MCF 10A (cell line): ENCODE measurements at regions of chr3 and their contacts with region 1.

Region 1: GRCh38 chr3:189841473-189842210 is 210.5 kb downstream of the TP63 start:
- DNase-seq: peak; percentile 94
- H3K4me3 Mint-ChIP-seq: peak overlapping the region; percentile 57
- H3K27ac Mint-ChIP-seq: peak overlapping the region; percentile 99
- H3K4me1 Mint-ChIP-seq: peaks cover 58% of the 10 kb centered on the region
- H3K27me3 Mint-ChIP-seq: no peaks in the 10 kb centered on the region
- CTCF ChIP-seq: no peak

Region 2: DNA sequence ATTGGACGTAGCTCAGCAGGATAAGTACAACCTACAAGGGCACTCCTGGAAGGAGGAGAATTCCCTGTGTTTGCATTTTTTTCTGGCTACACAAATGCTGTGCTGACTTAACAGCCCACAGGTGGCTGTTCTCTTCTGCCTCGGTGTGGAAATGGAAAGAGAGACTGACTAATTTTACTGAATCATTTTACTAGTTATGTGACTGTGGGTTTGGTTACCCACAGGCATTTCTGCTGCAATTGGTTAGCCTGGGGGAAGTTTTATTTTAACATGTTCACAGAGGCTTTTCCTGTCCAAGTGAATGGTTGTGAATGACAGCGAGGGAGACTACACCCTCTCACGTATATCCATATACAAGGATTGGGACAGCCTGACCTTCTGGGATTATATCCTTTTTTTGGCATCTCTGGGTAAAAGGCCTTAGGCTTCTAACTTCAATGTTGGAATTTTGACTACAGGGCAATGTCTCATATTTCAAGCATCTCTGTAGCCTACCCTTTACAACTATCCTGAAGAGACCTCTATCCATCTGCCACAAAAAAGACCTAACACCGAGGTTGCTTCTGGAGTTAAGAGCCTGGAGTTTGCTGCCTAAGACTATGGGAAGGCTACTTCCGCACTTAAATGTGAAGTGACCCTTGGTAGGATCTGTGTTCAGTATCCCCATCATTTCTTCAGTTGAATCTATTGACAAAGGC is 277.6 kb before region 1 on chr3:
- CTCF ChIA-PET with region 1: no interaction called
- POLR2A ChIA-PET with region 1: interaction called, 10 read pairs
- intact Hi-C with region 1: loop called (anchors 2 kb)
- DNase-seq: peak; percentile 92
- H3K4me3 Mint-ChIP-seq: no peak overlapping the region
- H3K27ac Mint-ChIP-seq: peak overlapping the region; percentile 69
- H3K4me1 Mint-ChIP-seq: peaks cover 26% of the 10 kb centered on the region
- H3K27me3 Mint-ChIP-seq: no peaks in the 10 kb centered on the region
- CTCF ChIP-seq: no peak

Region 3: GRCh38 chr3:189685854-189686253 is 155.8 kb before region 1 on chr3:
- CTCF ChIA-PET with region 1: no interaction called
- POLR2A ChIA-PET with region 1: no interaction called
- intact Hi-C with region 1: no loop called
- DNase-seq: peak; percentile 34
- H3K4me3 Mint-ChIP-seq: no peak overlapping the region
- H3K27ac Mint-ChIP-seq: peak overlapping the region; percentile 47
- H3K4me1 Mint-ChIP-seq: peaks cover 10% of the 10 kb centered on the region
- H3K27me3 Mint-ChIP-seq: no peaks in the 10 kb centered on the region
- CTCF ChIP-seq: no peak

Region 4: DNA sequence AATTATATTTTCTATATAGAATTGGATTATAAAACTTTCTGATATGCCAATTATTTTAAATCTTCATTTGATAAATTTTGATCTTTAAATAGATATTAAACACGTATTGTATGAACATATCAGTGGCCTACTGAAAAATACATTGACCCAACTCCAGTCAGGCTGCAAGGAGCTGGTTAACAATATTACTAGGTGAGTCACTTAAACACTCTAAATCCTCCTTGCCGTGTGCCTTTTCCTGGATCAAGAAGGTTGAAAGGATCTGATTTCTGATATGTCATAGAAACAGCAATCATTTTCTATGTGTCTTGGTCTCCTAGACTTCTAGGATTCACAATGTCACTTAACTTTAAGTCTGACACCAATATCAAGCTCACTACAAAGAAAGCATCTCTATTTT is 87.3 kb before region 1 on chr3:
- CTCF ChIA-PET with region 1: no interaction called
- POLR2A ChIA-PET with region 1: no interaction called
- intact Hi-C with region 1: no loop called
- DNase-seq: no peak
- H3K4me3 Mint-ChIP-seq: no peak overlapping the region
- H3K27ac Mint-ChIP-seq: no peak overlapping the region
- H3K4me1 Mint-ChIP-seq: peaks cover 10% of the 10 kb centered on the region
- H3K27me3 Mint-ChIP-seq: no peaks in the 10 kb centered on the region
- CTCF ChIP-seq: no peak

Region 5: DNA sequence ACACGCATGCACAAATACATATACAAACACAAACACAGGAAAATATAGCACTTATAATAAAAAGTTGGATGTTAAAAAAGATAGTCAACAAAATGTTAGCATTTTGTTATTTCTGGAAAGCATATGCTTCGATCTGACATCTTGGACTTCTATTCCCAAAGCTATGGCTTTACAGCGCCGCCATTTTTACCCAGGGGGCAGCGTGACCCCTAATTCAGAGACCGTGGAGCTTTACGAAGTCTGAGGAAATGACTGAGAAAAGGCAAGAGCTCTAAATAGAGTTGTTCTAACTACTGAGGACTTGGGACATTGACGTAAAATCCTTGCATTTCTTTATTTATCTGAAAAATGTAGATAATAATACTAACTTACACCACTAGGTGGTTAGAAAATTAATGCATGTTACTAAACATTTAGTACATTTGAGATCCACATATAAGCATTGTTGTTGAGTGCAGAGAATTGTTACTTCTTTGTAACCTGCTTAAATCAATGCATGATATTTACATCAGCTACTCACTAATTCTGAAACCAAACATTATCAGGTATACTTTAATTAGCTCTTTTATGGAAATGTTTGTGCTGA is 55.1 kb before region 1 on chr3:
- CTCF ChIA-PET with region 1: no interaction called
- POLR2A ChIA-PET with region 1: interaction called, 86 read pairs
- intact Hi-C with region 1: no loop called
- DNase-seq: no peak
- H3K4me3 Mint-ChIP-seq: no peak overlapping the region
- H3K27ac Mint-ChIP-seq: no peak overlapping the region
- H3K4me1 Mint-ChIP-seq: peaks cover 5% of the 10 kb centered on the region
- H3K27me3 Mint-ChIP-seq: no peaks in the 10 kb centered on the region
- CTCF ChIP-seq: peak; percentile 20

Region 6: GRCh38 chr3:189853906-189854305 is 12.3 kb after region 1 on chr3:
- CTCF ChIA-PET with region 1: interaction called, 3 read pairs
- POLR2A ChIA-PET with region 1: interaction called, 109 read pairs
- intact Hi-C with region 1: no loop called
- DNase-seq: no peak
- H3K4me3 Mint-ChIP-seq: no peak overlapping the region
- H3K27ac Mint-ChIP-seq: no peak overlapping the region
- H3K4me1 Mint-ChIP-seq: peaks cover 5% of the 10 kb centered on the region
- H3K27me3 Mint-ChIP-seq: no peaks in the 10 kb centered on the region
- CTCF ChIP-seq: no peak

Region 7: GRCh38 chr3:189908646-189909045 is 67.0 kb after region 1 on chr3:
- CTCF ChIA-PET with region 1: interaction called, 7 read pairs
- POLR2A ChIA-PET with region 1: interaction called, 35 read pairs
- intact Hi-C with region 1: no loop called
- DNase-seq: peak; percentile 86
- H3K4me3 Mint-ChIP-seq: no peak overlapping the region
- H3K27ac Mint-ChIP-seq: peak overlapping the region; percentile 80
- H3K4me1 Mint-ChIP-seq: peaks cover 33% of the 10 kb centered on the region
- H3K27me3 Mint-ChIP-seq: no peaks in the 10 kb centered on the region
- CTCF ChIP-seq: no peak

Region 8: DNA sequence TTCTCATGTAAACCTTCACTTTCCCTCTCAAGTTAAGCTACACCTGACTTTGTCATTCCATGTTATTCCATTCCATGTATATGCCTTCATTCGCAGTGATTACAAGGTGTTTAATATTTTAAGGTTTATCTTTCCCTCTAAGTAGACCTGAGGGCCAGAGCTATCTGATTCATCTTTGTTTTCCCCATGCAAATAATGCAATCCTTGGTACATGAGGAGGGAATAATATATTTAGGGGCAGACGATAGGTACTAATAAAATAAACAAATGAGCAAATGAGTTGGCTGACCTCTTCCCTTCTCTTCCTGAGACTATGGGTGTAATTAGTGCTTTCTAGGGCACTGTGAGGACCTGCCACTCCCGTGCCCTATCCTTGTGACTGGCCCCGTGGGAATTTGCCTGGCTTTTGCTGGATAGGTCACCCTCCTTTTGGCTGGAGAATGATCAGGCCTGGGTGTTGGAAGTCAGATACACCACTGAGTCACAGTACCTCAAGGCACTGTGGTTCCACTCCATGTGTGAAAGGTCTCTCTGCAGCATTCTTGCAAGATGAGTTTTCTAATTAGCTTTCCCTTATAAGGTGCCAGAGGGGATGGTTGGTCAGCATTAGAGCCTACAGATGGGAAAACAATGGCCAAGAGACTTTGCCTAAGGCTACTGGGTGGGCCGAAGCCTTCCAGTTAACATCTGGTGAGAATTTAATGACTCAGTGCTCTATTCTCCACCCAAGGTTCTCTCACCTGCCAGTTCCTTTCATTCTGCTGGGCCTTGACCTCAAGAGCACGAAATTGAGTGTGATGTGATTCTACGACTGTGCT is 95.9 kb after region 1 on chr3:
- CTCF ChIA-PET with region 1: interaction called, 3 read pairs
- POLR2A ChIA-PET with region 1: interaction called, 57 read pairs
- intact Hi-C with region 1: loop called (anchors 2 kb)
- DNase-seq: peak; percentile 100
- H3K4me3 Mint-ChIP-seq: peak overlapping the region; percentile 33
- H3K27ac Mint-ChIP-seq: peak overlapping the region; percentile 95
- H3K4me1 Mint-ChIP-seq: peaks cover 39% of the 10 kb centered on the region
- H3K27me3 Mint-ChIP-seq: no peaks in the 10 kb centered on the region
- CTCF ChIP-seq: no peak

Region 9: GRCh38 chr3:190581041-190581541 is 739.4 kb after region 1 on chr3:
- CTCF ChIA-PET with region 1: no interaction called
- POLR2A ChIA-PET with region 1: no interaction called
- intact Hi-C with region 1: no loop called
- DNase-seq: no peak
- H3K4me3 Mint-ChIP-seq: no peak overlapping the region
- H3K27ac Mint-ChIP-seq: no peak overlapping the region
- H3K4me1 Mint-ChIP-seq: peaks cover 12% of the 10 kb centered on the region
- H3K27me3 Mint-ChIP-seq: no peaks in the 10 kb centered on the region
- CTCF ChIP-seq: no peak